Heart left ventricle (tissue), 16 donors: ENCODE measurements at regions of chr5 and their contacts with region 1.

Region 1: GRCh38 chr5:56429082-56429891 is 196.2 kb upstream of the ANKRD55 start:
- DNase-seq: peak; percentile 52 to 81 (median 75)
- ATAC-seq: peak; percentile 37 to 86 (median 60)
- H3K4me3 ChIP-seq: no peak overlapping the region
- H3K27ac ChIP-seq: no peak overlapping the region
- H3K4me1 ChIP-seq: peaks cover 0 to 12% (median 4%) of the 10 kb centered on the region in 12 donors
- H3K27me3 ChIP-seq: no peaks in the 10 kb centered on the region
- CTCF ChIP-seq: no peak
- POLR2A ChIP-seq: no peak

Region 2: GRCh38 chr5:56175488-56175887 is 253.8 kb before region 1 on chr5:
- intact Hi-C with region 1: no loop called
- DNase-seq: peak in 4 of 5 donors; percentile 35 to 49 (median 39)
- ATAC-seq: peak; percentile 53 to 90 (median 82)
- H3K4me3 ChIP-seq: no peak overlapping the region
- H3K27ac ChIP-seq: peak overlapping the region in 9 of 12 donors; percentile 11 to 66 (median 49)
- H3K4me1 ChIP-seq: peaks cover 0 to 63% (median 21%) of the 10 kb centered on the region in 12 donors
- H3K27me3 ChIP-seq: no peaks in the 10 kb centered on the region
- CTCF ChIP-seq: no peak
- POLR2A ChIP-seq: no peak

Region 3: GRCh38 chr5:56565644-56566043 is 136.4 kb after region 1 on chr5:
- intact Hi-C with region 1: loop called in 1 of 10 experiments (anchors 10 kb)
- DNase-seq: no peak
- ATAC-seq: peak in 3 of 4 donors; percentile 31 to 60 (median 46)
- H3K4me3 ChIP-seq: no peak overlapping the region
- H3K27ac ChIP-seq: peak overlapping the region in 1 of 12 donors; percentile 39
- H3K4me1 ChIP-seq: peaks cover 0 to 42% (median 4%) of the 10 kb centered on the region in 12 donors
- H3K27me3 ChIP-seq: no peaks in the 10 kb centered on the region
- CTCF ChIP-seq: no peak
- POLR2A ChIP-seq: no peak

Region 4: GRCh38 chr5:57338068-57338892 is 909.0 kb after region 1 on chr5:
- intact Hi-C with region 1: no loop called
- DNase-seq: no peak
- ATAC-seq: peak in 1 of 4 donors; percentile 57
- H3K4me3 ChIP-seq: no peak overlapping the region
- H3K27ac ChIP-seq: no peak overlapping the region
- H3K4me1 ChIP-seq: peaks cover 0 to 6% (median 0%) of the 10 kb centered on the region in 12 donors
- H3K27me3 ChIP-seq: no peaks in the 10 kb centered on the region
- CTCF ChIP-seq: peak in 11 of 12 donors; percentile 19 to 50 (median 33)
- POLR2A ChIP-seq: no peak